Ascending aorta (tissue), 2 donors: ENCODE measurements at regions of chr17 and their contacts with region 1.

Region 1: DNA sequence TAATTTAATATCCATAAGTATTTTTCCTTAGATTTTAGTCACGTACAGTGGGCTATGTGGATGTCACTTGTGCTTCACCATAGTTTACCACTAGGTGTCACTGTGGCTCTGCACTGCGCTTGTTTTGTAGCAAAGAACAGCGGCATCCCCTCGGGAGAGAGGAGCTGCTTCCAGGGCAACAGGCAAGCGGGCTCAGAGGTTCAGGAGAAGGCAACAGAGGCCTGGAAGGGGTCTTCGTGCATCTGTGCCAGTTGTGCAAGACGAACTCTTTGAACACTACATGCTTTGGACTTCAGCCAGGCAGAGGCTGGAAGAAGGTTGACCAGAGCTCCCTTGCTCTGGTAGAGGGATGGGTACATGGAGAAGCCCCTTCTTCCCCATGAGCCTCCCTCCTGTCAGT is 20.6 kb downstream of the CYB561 start:
- DNase-seq: peak in 1 of 2 donors; percentile 87
- H3K4me3 ChIP-seq: no peak overlapping the region
- H3K27ac ChIP-seq: no peak overlapping the region
- H3K4me1 ChIP-seq: no peaks in the 10 kb centered on the region
- H3K27me3 ChIP-seq: no peaks in the 10 kb centered on the region
- CTCF ChIP-seq: peak; percentile 90 to 94 (median 93)

Region 2: DNA sequence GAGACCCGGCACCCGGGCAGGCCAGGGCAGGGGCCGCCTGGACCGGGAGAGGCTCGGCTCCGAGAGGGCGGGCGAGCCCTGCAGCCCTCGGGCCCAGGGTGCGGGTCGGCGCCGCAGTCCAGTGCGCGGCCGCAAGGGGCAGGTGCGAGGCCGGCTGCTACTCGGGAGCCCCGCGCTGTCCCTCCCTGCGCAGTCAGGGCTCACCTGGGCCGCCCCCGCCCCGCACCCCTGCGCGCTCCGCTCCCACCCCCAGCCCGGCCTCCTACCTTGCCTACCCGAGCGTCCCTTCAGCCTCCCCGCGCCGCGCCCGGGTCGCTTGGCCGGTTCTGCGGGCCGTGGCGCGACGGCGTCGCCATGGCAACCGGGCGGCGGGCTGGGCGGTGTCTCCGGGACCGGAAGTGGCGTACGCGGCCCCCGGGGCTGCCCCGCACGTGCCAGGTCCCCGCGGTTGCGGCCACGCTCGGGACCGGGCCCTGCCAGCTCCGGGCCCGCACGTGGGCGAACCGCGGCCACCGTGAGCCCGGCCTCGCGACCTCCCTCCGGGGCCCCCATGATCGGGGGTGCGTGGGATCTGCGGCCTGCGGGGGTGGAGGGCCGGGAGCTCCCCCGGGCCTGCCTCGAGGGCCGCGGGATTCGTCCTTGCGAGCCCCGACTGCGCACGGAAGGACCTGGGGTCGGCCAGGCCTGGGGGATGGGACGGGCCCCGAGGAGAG is 20.7 kb after region 1 on chr17 and contains the start of gene CYB561:
- intact Hi-C with region 1: no loop called
- DNase-seq: peak in 1 of 2 donors; percentile 80
- H3K4me3 ChIP-seq: peak within 1 kb of the TSS; percentile 75 to 82
- H3K27ac ChIP-seq: peak within 1 kb of the TSS; percentile 14 to 79
- H3K4me1 ChIP-seq: peaks cover 8 to 9% of the 10 kb centered on the region in 2 donors
- H3K27me3 ChIP-seq: no peaks in the 10 kb centered on the region
- CTCF ChIP-seq: peak in 2 of 3 experiments; percentile 29 to 43
- total RNA-seq, gene CYB561: 23.0 TPM

Region 3: DNA sequence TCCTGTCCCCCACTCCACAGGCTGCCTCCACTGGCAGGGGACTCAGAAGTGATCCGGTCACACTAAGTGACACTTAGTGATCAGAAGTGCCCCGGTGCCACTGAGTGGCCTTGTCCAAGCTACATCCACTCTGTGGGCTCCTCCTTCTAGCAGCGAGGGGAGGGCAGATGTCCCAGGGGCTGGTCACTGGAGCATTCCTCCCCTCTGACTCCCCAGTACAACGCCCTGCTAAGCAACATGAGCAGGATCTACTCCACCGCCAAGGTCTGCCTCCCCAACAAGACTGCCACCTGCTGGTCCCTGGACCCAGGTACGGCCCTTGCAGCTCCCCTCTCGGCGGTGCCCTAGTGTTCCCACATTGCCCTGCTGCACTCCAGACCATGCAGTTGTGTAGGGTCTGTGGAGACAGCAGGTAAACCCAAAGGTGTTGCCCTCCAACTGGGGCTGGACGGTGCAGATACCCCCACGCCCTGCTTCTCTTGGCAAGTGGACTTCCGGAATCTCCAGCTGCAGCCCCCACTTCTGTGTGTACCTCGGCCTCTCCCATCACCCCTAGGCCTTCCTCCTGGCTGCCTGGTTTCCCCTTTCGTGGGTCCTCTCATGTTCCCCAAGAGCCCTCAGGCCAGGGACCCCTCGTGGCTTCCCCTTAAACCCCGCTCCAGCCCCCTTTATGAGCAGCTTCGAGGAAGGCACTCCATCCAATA is 53.5 kb after region 1 on chr17:
- intact Hi-C with region 1: loop called (anchors 1 kb)
- DNase-seq: peak in 1 of 2 donors; percentile 86
- H3K4me3 ChIP-seq: no peak overlapping the region
- H3K27ac ChIP-seq: no peak overlapping the region
- H3K4me1 ChIP-seq: peaks cover 0 to 15% of the 10 kb centered on the region in 2 donors
- H3K27me3 ChIP-seq: no peaks in the 10 kb centered on the region
- CTCF ChIP-seq: peak; percentile 51 to 69 (median 69)

Region 4: GRCh38 chr17:63611354-63611753 is 185.9 kb after region 1 on chr17:
- intact Hi-C with region 1: loop called (anchors 1 kb)
- DNase-seq: no peak
- H3K4me3 ChIP-seq: no peak overlapping the region
- H3K27ac ChIP-seq: no peak overlapping the region
- H3K4me1 ChIP-seq: no peaks in the 10 kb centered on the region
- H3K27me3 ChIP-seq: no peaks in the 10 kb centered on the region
- CTCF ChIP-seq: no peak